Heart left ventricle (tissue), 16 donors: ENCODE measurements at regions of chr13 and their contacts with region 1.

Region 1: DNA sequence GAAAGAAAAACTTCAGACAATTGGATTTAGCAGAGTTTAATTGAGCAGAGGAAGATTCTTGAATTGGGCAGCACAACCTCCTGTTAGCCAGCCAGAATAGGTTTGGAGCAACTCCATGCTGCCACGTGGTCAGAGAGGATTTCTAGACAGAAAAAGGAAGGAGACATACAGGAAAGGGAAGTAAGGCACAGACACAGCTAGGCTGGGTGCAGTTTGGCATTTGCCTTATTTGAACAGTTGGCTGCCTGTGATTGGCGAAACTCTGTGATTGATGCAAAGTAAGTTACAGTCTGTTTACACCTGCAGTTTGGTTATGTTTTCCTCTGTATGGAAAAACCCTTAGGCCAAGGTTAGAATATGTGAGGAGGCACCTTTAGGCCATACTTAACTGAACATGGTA is 85.8 kb upstream of the SPATA13 start:
- DNase-seq: no peak
- ATAC-seq: peak in 2 of 4 donors; percentile 55
- H3K4me3 ChIP-seq: no peak overlapping the region
- H3K27ac ChIP-seq: peak overlapping the region in 3 of 12 donors; percentile 5 to 8 (median 7)
- H3K4me1 ChIP-seq: peaks cover 0 to 45% (median 12%) of the 10 kb centered on the region in 12 donors
- H3K27me3 ChIP-seq: no peaks in the 10 kb centered on the region
- CTCF ChIP-seq: no peak
- POLR2A ChIP-seq: no peak

Region 2: GRCh38 chr13:24038841-24039330 is 35.8 kb before region 1 on chr13:
- intact Hi-C with region 1: no loop called
- DNase-seq: no peak
- ATAC-seq: peak in 3 of 4 donors; percentile 39 to 50 (median 48)
- H3K4me3 ChIP-seq: no peak overlapping the region
- H3K27ac ChIP-seq: peak overlapping the region in 2 of 12 donors; percentile 6 to 8
- H3K4me1 ChIP-seq: peaks cover 0 to 16% (median under 1%) of the 10 kb centered on the region in 12 donors
- H3K27me3 ChIP-seq: no peaks in the 10 kb centered on the region
- CTCF ChIP-seq: no peak
- POLR2A ChIP-seq: no peak

Region 3: DNA sequence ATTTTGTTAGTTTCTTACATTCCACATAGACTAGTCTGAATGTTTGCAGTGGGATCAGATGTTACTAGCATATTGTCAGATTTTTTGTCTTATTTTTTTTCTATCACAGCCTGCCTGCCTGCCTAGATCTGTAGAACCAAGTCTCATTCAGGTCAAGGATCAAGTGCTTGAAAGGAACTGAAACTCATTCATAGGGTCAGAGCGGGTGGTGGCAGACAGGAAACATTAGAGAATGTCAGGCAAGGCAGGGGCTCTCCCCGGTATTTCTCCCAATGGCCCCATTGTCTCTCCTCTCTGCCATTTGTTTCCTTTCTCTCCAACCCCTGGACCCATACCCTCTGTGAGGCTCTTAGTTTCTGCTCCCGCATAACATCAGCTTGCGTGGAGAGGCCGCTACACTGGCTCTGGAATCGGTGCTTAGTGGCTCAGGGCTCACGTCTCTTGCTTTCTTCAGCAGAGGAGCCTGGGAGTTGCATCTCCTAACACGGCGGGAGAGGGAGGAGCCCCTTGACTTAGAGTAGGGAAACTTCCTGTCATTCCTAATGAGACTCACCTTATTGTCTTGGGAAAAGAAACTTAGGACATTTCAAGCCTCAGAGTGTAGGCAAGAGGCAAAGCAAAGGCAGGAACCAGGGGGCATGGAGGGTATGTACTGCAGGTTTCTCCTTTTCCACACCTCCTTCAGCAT is 50.2 kb after region 1 on chr13:
- intact Hi-C with region 1: loop called in 1 of 10 experiments (anchors 5 kb)
- DNase-seq: peak in 1 of 5 donors; percentile 38
- ATAC-seq: peak in 3 of 4 donors; percentile 42 to 74 (median 50)
- H3K4me3 ChIP-seq: no peak overlapping the region
- H3K27ac ChIP-seq: peak overlapping the region in 10 of 12 donors; percentile 5 to 71 (median 54)
- H3K4me1 ChIP-seq: peaks cover 0 to 31% (median 11%) of the 10 kb centered on the region in 12 donors
- H3K27me3 ChIP-seq: peaks cover 0 to 4% (median 0%) of the 10 kb centered on the region in 9 donors
- CTCF ChIP-seq: no peak
- POLR2A ChIP-seq: no peak